ENCODE measurements at regions of chr5 and their contacts with region 1.

Region 1: GRCh38 chr5:42908509-42909488 is 97.1 kb upstream of the SELENOP start:
- DNase-seq: peak; percentile 85
- CTCF ChIP-seq: peak; percentile 79

Region 2: GRCh38 chr5:42889311-42889933 is 19.4 kb before region 1 on chr5:
- CTCF ChIA-PET with region 1: interaction called, 16 read pairs
- POLR2A ChIA-PET with region 1: no interaction called
- DNase-seq: peak; percentile 66
- CTCF ChIP-seq: peak; percentile 90

Region 3: GRCh38 chr5:42923710-42924109 is 14.9 kb after region 1 on chr5:
- CTCF ChIA-PET with region 1: interaction called, 29 read pairs
- POLR2A ChIA-PET with region 1: no interaction called
- DNase-seq: no peak
- CTCF ChIP-seq: no peak

Region 4: DNA sequence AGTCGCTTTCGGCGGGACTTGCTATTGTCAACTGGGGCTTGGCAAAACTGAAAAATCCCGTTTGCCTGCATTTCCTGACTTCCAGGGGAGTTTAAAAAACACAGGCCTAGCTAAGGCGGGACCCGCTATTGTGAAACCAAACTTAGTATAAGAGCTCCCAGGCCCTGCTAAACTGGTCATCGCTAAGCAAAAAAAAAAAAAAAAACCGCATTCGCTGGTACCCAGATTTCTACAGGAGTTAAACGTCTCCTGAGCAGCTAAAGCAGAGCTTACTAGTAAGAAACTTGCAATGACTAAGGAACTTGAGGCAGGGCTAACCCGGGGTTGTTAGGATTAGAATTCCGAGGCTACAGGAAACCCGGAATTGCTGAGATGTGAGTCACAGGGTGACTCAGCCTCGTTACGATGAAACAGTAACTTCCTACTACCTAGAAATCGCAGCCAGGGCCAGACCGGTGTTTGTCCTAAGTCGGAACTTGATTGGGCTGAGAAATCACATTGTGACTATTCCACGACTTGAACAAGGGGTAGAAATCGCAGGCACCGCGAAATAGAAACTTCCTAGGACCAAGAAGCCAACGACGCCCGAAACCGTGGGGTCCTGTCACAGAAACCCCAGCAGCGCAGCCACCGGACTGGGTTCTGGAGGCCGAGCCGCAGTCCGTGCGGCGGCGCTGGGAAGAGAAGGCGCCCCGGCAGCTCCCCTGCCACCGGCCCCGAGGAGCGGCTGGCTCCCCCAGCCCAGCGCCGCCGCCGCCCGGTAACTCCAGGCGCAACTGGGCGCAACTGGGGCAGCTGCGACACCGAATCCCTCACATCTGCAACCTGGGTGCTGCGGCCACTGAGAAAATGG is 41.9 kb after region 1 on chr5:
- CTCF ChIA-PET with region 1: interaction called, 17 read pairs
- POLR2A ChIA-PET with region 1: no interaction called
- DNase-seq: peak; percentile 62
- CTCF ChIP-seq: no peak

Region 5: GRCh38 chr5:42994246-42995151 is 85.7 kb after region 1 on chr5:
- CTCF ChIA-PET with region 1: interaction called, 20 read pairs
- POLR2A ChIA-PET with region 1: no interaction called
- DNase-seq: peak; percentile 63
- CTCF ChIP-seq: peak; percentile 86

Region 6: GRCh38 chr5:43008369-43009153 is 99.8 kb after region 1 on chr5:
- CTCF ChIA-PET with region 1: interaction called, 12 read pairs
- POLR2A ChIA-PET with region 1: no interaction called
- DNase-seq: peak; percentile 73
- CTCF ChIP-seq: peak; percentile 32

Region 7: GRCh38 chr5:43019614-43020293 is 111.0 kb after region 1 on chr5:
- CTCF ChIA-PET with region 1: interaction called, 16 read pairs
- POLR2A ChIA-PET with region 1: no interaction called
- DNase-seq: peak; percentile 67
- CTCF ChIP-seq: peak; percentile 33

Region 8: GRCh38 chr5:43129161-43129560 is 220.4 kb after region 1 on chr5:
- CTCF ChIA-PET with region 1: no interaction called
- POLR2A ChIA-PET with region 1: no interaction called
- DNase-seq: no peak
- CTCF ChIP-seq: no peak

Region 9: GRCh38 chr5:43191740-43192557 is 283.1 kb after region 1 on chr5 and contains the start of gene NIM1K:
- CTCF ChIA-PET with region 1: no interaction called
- POLR2A ChIA-PET with region 1: no interaction called
- DNase-seq: peak; percentile 82
- CTCF ChIP-seq: no peak

Measured in GM10248 (cell line).